Activated CD4-positive, alpha-beta memory T cell treated with anti-CD3 and anti-CD28 coated beads, Interleukin-2, amount 10 ng/mL, durations not matched to agents 7 days and 5 days (primary cell): ENCODE measurements at regions of chr3 and their contacts with region 1.

Region 1: GRCh38 chr3:30693470-30694120 is 87.2 kb downstream of the TGFBR2 start:
- DNase-seq: peak; percentile 40
- H3K4me3 Mint-ChIP-seq: no peak overlapping the region
- H3K27ac Mint-ChIP-seq: no peak overlapping the region
- H3K4me1 Mint-ChIP-seq: peaks cover 36% of the 10 kb centered on the region
- H3K27me3 Mint-ChIP-seq: no peaks in the 10 kb centered on the region

Region 2: GRCh38 chr3:30042274-30042859 is 651.2 kb before region 1 on chr3:
- CTCF ChIA-PET with region 1: interaction called, 11 read pairs
- POLR2A ChIA-PET with region 1: no interaction called
- DNase-seq: peak; percentile 57
- H3K4me3 Mint-ChIP-seq: no peak overlapping the region
- H3K27ac Mint-ChIP-seq: no peak overlapping the region
- H3K4me1 Mint-ChIP-seq: no peaks in the 10 kb centered on the region
- H3K27me3 Mint-ChIP-seq: peaks cover 23% of the 10 kb centered on the region

Region 3: GRCh38 chr3:30112902-30113484 is 580.6 kb before region 1 on chr3:
- CTCF ChIA-PET with region 1: interaction called, 10 read pairs
- POLR2A ChIA-PET with region 1: no interaction called
- DNase-seq: no peak
- H3K4me3 Mint-ChIP-seq: no peak overlapping the region
- H3K27ac Mint-ChIP-seq: no peak overlapping the region
- H3K4me1 Mint-ChIP-seq: no peaks in the 10 kb centered on the region
- H3K27me3 Mint-ChIP-seq: peaks cover 5% of the 10 kb centered on the region

Region 4: GRCh38 chr3:30199096-30199759 is 494.4 kb before region 1 on chr3:
- CTCF ChIA-PET with region 1: interaction called, 34 read pairs
- POLR2A ChIA-PET with region 1: no interaction called
- DNase-seq: peak; percentile 71
- H3K4me3 Mint-ChIP-seq: no peak overlapping the region
- H3K27ac Mint-ChIP-seq: no peak overlapping the region
- H3K4me1 Mint-ChIP-seq: no peaks in the 10 kb centered on the region
- H3K27me3 Mint-ChIP-seq: no peaks in the 10 kb centered on the region

Region 5: DNA sequence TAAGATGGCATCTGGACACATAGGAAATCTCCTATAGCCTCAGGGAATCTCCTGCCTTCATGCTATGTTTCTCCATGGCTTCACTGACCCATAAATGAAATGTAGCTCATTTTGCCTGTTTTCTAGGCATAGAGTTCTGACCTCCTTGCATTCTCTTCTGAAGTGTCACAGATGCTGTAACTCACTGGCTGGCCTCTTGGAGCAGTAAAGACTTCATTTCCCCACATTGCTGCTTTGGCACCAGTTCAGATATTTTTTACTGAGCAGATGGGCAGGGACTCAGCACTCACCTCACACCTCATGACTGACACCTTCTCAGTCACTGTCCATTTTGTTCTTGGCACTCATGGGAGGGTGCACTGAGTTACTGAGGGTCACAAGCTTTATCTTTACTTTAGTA is 373.9 kb before region 1 on chr3:
- CTCF ChIA-PET with region 1: interaction called, 11 read pairs
- POLR2A ChIA-PET with region 1: no interaction called
- DNase-seq: peak; percentile 18
- H3K4me3 Mint-ChIP-seq: no peak overlapping the region
- H3K27ac Mint-ChIP-seq: no peak overlapping the region
- H3K4me1 Mint-ChIP-seq: peaks cover 3% of the 10 kb centered on the region
- H3K27me3 Mint-ChIP-seq: no peaks in the 10 kb centered on the region

Region 6: DNA sequence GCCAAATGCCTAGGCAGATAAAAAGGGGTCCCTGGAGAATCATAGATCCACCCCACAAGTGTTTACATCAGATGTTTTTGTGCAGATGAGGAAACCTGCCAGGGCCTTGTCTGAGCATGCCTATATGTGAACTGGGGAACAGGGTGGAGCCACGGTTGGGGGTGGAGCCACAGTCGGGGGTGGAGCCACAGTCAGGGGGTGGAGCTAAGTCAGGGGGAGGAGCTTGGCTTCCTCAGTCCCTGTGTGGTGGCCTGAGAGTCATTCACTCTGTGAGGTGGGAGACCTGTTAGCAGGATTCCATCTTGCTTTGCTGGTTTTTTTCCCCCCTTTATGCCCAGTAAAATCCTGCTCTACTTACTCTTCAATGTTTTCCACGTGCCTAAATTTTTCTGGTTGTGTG is 145.0 kb before region 1 on chr3:
- CTCF ChIA-PET with region 1: no interaction called
- POLR2A ChIA-PET with region 1: no interaction called
- DNase-seq: peak; percentile 16
- H3K4me3 Mint-ChIP-seq: no peak overlapping the region
- H3K27ac Mint-ChIP-seq: no peak overlapping the region
- H3K4me1 Mint-ChIP-seq: no peaks in the 10 kb centered on the region
- H3K27me3 Mint-ChIP-seq: no peaks in the 10 kb centered on the region

Region 7: DNA sequence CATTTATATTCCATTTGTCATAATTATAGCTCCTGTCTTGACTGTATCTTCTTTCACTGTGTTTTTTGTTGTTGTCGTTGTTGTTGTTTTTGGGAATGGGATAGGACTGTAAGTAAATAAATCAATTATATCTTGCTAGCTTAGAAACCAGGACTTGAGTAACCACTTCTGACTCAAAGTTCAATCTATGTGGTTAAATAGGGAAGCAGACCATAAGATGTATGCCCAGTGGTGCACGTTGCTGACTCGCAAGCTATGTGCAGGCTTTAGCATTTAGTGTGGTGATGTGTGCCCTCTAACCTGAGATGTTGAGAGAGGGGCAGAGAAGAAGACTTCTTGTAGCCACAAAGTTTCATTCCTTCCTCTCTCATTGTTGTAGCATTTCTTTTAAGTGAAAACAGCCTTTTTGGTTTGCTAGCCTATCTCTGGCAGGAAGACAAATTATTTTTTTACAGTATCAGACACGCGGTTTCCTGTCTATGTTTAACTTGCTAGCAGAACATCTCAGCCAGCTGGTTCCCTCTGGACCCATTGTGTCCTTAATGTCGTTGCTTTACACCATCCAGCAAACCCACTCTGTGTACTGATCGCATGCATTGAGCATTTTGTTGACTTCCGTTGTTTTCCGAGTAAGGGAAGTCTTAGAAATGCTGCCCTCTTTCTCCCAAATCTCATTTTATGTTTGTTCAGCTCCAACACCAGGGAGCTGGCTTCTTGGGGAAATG is 35.1 kb before region 1 on chr3:
- CTCF ChIA-PET with region 1: interaction called, 11 read pairs
- POLR2A ChIA-PET with region 1: interaction called, 5 read pairs
- DNase-seq: peak; percentile 64
- H3K4me3 Mint-ChIP-seq: peak overlapping the region; percentile 59
- H3K27ac Mint-ChIP-seq: peak overlapping the region; percentile 99
- H3K4me1 Mint-ChIP-seq: peaks cover 98% of the 10 kb centered on the region
- H3K27me3 Mint-ChIP-seq: no peaks in the 10 kb centered on the region